ENCODE measurements at regions of chr4 and their contacts with region 1.

Region 1: GRCh38 chr4:88823058-88823919 is 125.7 kb upstream of the NAP1L5 start:
- DNase-seq: peak; percentile 94 to 97
- H3K4me3 ChIP-seq: peak overlapping the region; percentile 53 to 58
- H3K27ac ChIP-seq: peak overlapping the region; percentile 86
- H3K4me1 ChIP-seq: peaks cover 0 to 42% (median 12%) of the 10 kb centered on the region in 4 donors
- H3K27me3 ChIP-seq: no peaks in the 10 kb centered on the region
- CTCF ChIP-seq: no peak

Region 2: GRCh38 chr4:88706574-88706973 is 116.7 kb before region 1 on chr4:
- intact Hi-C with region 1: loop called (anchors 10 kb)
- DNase-seq: peak in 1 of 2 donors; percentile 80
- H3K4me3 ChIP-seq: no peak overlapping the region
- H3K27ac ChIP-seq: peak overlapping the region; percentile 62 to 79
- H3K4me1 ChIP-seq: peaks cover 0 to 23% (median 21%) of the 10 kb centered on the region in 4 donors
- H3K27me3 ChIP-seq: no peaks in the 10 kb centered on the region
- CTCF ChIP-seq: peak; percentile 69 to 70

Region 3: GRCh38 chr4:89024051-89024675 is 200.9 kb after region 1 on chr4:
- intact Hi-C with region 1: loop called (anchors 5 kb)
- DNase-seq: peak in 1 of 2 donors; percentile 66
- H3K4me3 ChIP-seq: no peak overlapping the region
- H3K27ac ChIP-seq: no peak overlapping the region
- H3K4me1 ChIP-seq: peaks cover 0 to 24% (median 2%) of the 10 kb centered on the region in 4 donors
- H3K27me3 ChIP-seq: no peaks in the 10 kb centered on the region
- CTCF ChIP-seq: peak; percentile 74 to 95

Region 4: GRCh38 chr4:89110986-89111832 is 287.9 kb after region 1 on chr4 and contains the start of gene TIGD2:
- intact Hi-C with region 1: loop called (anchors 5 kb)
- DNase-seq: peak; percentile 80 to 93
- H3K4me3 ChIP-seq: peak within 1 kb of the TSS; percentile 67 to 76
- H3K27ac ChIP-seq: peak within 1 kb of the TSS; percentile 76 to 79
- H3K4me1 ChIP-seq: peaks cover 0 to 20% (median 9%) of the 10 kb centered on the region in 4 donors
- H3K27me3 ChIP-seq: no peaks in the 10 kb centered on the region
- CTCF ChIP-seq: peak; percentile 81 to 86